ENCODE measurements at regions of chr11 and their contacts with region 1.

Region 1: GRCh38 chr11:94731880-94732601 is 36.1 kb upstream of the AMOTL1 start:
- DNase-seq: peak; percentile 95
- H3K4me3 Mint-ChIP-seq: no peak overlapping the region
- H3K27ac Mint-ChIP-seq: peak overlapping the region; percentile 77
- H3K4me1 Mint-ChIP-seq: peaks cover 34% of the 10 kb centered on the region
- H3K27me3 Mint-ChIP-seq: no peaks in the 10 kb centered on the region
- CTCF ChIP-seq: no peak

Region 2: GRCh38 chr11:94747146-94748080 is 15.4 kb after region 1 on chr11:
- CTCF ChIA-PET with region 1: interaction called, 19 read pairs
- POLR2A ChIA-PET with region 1: interaction called, 43 read pairs
- intact Hi-C with region 1: no loop called
- DNase-seq: peak; percentile 64
- H3K4me3 Mint-ChIP-seq: peak overlapping the region; percentile 2
- H3K27ac Mint-ChIP-seq: peak overlapping the region; percentile 95
- H3K4me1 Mint-ChIP-seq: peaks cover 59% of the 10 kb centered on the region
- H3K27me3 Mint-ChIP-seq: no peaks in the 10 kb centered on the region
- CTCF ChIP-seq: no peak